Heart right ventricle (tissue), 16 donors: ENCODE measurements at regions of chr10 and their contacts with region 1.

Region 1: GRCh38 chr10:119416855-119417254 is 125.7 kb downstream of the RGS10 start:
- DNase-seq: peak; percentile 70 to 72
- ATAC-seq: peak; percentile 13 to 48 (median 36)
- H3K4me3 ChIP-seq: no peak overlapping the region
- H3K27ac ChIP-seq: peak overlapping the region in 9 of 10 donors; percentile 3 to 92 (median 66)
- H3K4me1 ChIP-seq: peaks cover 24 to 73% (median 57%) of the 10 kb centered on the region in 9 donors
- H3K27me3 ChIP-seq: no peaks in the 10 kb centered on the region
- CTCF ChIP-seq: peak; percentile 37 to 88 (median 78)

Region 2: DNA sequence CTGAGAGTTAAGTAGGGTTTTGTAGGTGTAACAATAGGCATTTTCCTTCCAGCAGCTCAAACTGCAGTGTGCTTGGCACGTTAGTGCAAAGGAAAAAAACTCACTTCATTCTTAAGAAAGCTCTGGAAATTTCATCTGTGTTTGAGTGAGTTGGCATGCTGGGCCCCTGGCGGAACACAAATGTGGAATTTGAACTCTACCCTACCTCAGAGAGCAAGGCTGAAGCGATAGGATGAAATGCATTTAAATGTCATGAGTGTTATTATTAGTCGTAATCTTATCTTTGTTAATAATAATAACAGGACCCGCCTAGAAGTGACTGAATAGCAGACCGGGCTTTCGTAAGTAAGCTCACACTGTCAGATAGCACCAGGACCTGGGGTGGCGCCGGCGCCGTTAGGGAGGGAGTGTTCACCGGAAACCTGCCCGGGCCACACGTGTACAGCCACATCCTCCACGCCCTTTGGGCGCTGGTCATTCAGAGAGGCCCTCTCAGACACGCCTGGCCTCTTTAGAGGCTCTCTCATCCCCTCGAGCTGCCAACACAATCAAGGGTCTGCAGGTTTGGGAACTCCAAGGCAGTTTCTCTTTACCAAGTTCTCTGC is 146.0 kb before region 1 on chr10:
- intact Hi-C with region 1: loop called in 1 of 10 experiments (anchors 10 kb)
- DNase-seq: peak; percentile 88 to 89
- ATAC-seq: peak; percentile 80 to 95 (median 90)
- H3K4me3 ChIP-seq: peak overlapping the region in 4 of 10 donors; percentile 13 to 37 (median 23)
- H3K27ac ChIP-seq: peak overlapping the region; percentile 48 to 90 (median 86)
- H3K4me1 ChIP-seq: peaks cover 29 to 94% (median 84%) of the 10 kb centered on the region in 9 donors
- H3K27me3 ChIP-seq: no peaks in the 10 kb centered on the region
- CTCF ChIP-seq: no peak

Region 3: GRCh38 chr10:119281581-119282071 is 135.2 kb before region 1 on chr10:
- intact Hi-C with region 1: loop called in 2 of 10 experiments (anchors 10 kb)
- DNase-seq: peak; percentile 88 to 91
- ATAC-seq: peak; percentile 32 to 84 (median 67)
- H3K4me3 ChIP-seq: no peak overlapping the region
- H3K27ac ChIP-seq: peak overlapping the region; percentile 18 to 70 (median 58)
- H3K4me1 ChIP-seq: peaks cover 48 to 99% (median 73%) of the 10 kb centered on the region in 9 donors
- H3K27me3 ChIP-seq: no peaks in the 10 kb centered on the region
- CTCF ChIP-seq: no peak

Region 4: GRCh38 chr10:119368991-119369869 is 47.6 kb before region 1 on chr10:
- intact Hi-C with region 1: loop called in 2 of 10 experiments (anchors 5 kb)
- DNase-seq: no peak
- ATAC-seq: peak in 1 of 8 donors; percentile 18
- H3K4me3 ChIP-seq: peak overlapping the region in 4 of 10 donors; percentile 15 to 26 (median 20)
- H3K27ac ChIP-seq: peak overlapping the region; percentile 44 to 95 (median 88)
- H3K4me1 ChIP-seq: peaks cover 37 to 85% (median 80%) of the 10 kb centered on the region in 9 donors
- H3K27me3 ChIP-seq: no peaks in the 10 kb centered on the region
- CTCF ChIP-seq: no peak